Mammary epithelial cell (primary cell): ENCODE measurements at regions of chr3 and their contacts with region 1.

Region 1: DNA sequence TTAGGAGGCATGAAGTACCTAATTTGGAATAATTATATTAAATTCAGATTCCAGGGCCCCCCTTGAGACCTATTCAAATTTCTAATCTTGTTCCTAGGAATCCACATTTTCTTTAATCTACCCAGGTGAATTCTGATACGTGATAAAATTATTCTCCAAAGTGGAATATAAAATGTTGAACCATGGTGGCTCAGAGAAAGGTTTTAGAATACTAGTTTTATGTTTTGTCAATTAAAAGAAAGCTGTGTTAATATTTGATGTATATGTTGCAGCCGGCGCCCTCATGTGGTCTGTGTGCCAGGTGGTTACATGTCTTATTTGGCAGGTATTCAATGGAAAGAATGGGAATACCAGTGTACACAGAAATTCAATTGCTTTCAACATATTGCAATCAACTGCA is 321.8 kb downstream of the FEZF2 start:
- DNase-seq: peak; percentile 23
- H3K4me3 ChIP-seq: no peak overlapping the region
- H3K27ac ChIP-seq: no peak overlapping the region
- H3K4me1 ChIP-seq: no peaks in the 10 kb centered on the region
- H3K27me3 ChIP-seq: no peaks in the 10 kb centered on the region
- CTCF ChIP-seq: peak; percentile 38 to 60

Region 2: GRCh38 chr3:61858056-61858455 is 193.5 kb before region 1 on chr3:
- CTCF ChIA-PET with region 1: no interaction called
- dilution Hi-C with region 1: no loop called
- in situ Hi-C with region 1: no loop called
- intact Hi-C with region 1: loop called (anchors 1 kb)
- DNase-seq: peak; percentile 12
- H3K4me3 ChIP-seq: no peak overlapping the region
- H3K27ac ChIP-seq: no peak overlapping the region
- H3K4me1 ChIP-seq: no peaks in the 10 kb centered on the region
- H3K27me3 ChIP-seq: no peaks in the 10 kb centered on the region
- CTCF ChIP-seq: peak; percentile 10 to 61

Region 3: GRCh38 chr3:61872077-61872706 is 179.3 kb before region 1 on chr3:
- CTCF ChIA-PET with region 1: no interaction called
- dilution Hi-C with region 1: no loop called
- in situ Hi-C with region 1: loop called in 1 of 2 experiments (anchors 5 kb)
- intact Hi-C with region 1: no loop called
- DNase-seq: no peak
- H3K4me3 ChIP-seq: no peak overlapping the region
- H3K27ac ChIP-seq: no peak overlapping the region
- H3K4me1 ChIP-seq: no peaks in the 10 kb centered on the region
- H3K27me3 ChIP-seq: no peaks in the 10 kb centered on the region
- CTCF ChIP-seq: no peak

Region 4: GRCh38 chr3:61966200-61966599 is 85.3 kb before region 1 on chr3:
- CTCF ChIA-PET with region 1: no interaction called
- dilution Hi-C with region 1: no loop called
- in situ Hi-C with region 1: no loop called
- intact Hi-C with region 1: loop called (anchors 5 kb)
- DNase-seq: peak; percentile 83
- H3K4me3 ChIP-seq: no peak overlapping the region
- H3K27ac ChIP-seq: no peak overlapping the region
- H3K4me1 ChIP-seq: peaks cover 29% of the 10 kb centered on the region
- H3K27me3 ChIP-seq: no peaks in the 10 kb centered on the region
- CTCF ChIP-seq: no peak